ENCODE measurements at regions of chr6 and their contacts with region 1.

Region 1: GRCh38 chr6:47521961-47522360 is 44.4 kb downstream of the CD2AP start:
- DNase-seq: no peak
- ATAC-seq: no peak
- H3K4me3 ChIP-seq: no peak overlapping the region
- H3K27ac ChIP-seq: no peak overlapping the region
- H3K4me1 ChIP-seq: no peaks in the 10 kb centered on the region; the same call in 1 of the 2 replicates
- H3K27me3 ChIP-seq: no peaks in the 10 kb centered on the region
- CTCF ChIP-seq: no peak

Region 2: GRCh38 chr6:46032110-46032998 is 1489.6 kb before region 1 on chr6:
- CTCF ChIA-PET with region 1: no interaction called
- POLR2A ChIA-PET with region 1: interaction called, 10 read pairs
- in situ Hi-C with region 1: no loop called
- intact Hi-C with region 1: no loop called
- DNase-seq: no peak
- ATAC-seq: no peak
- H3K4me3 ChIP-seq: no peak overlapping the region
- H3K27ac ChIP-seq: no peak overlapping the region
- H3K4me1 ChIP-seq: no peaks in the 10 kb centered on the region
- H3K27me3 ChIP-seq: peaks cover 10% of the 10 kb centered on the region
- CTCF ChIP-seq: no peak

Region 3: DNA sequence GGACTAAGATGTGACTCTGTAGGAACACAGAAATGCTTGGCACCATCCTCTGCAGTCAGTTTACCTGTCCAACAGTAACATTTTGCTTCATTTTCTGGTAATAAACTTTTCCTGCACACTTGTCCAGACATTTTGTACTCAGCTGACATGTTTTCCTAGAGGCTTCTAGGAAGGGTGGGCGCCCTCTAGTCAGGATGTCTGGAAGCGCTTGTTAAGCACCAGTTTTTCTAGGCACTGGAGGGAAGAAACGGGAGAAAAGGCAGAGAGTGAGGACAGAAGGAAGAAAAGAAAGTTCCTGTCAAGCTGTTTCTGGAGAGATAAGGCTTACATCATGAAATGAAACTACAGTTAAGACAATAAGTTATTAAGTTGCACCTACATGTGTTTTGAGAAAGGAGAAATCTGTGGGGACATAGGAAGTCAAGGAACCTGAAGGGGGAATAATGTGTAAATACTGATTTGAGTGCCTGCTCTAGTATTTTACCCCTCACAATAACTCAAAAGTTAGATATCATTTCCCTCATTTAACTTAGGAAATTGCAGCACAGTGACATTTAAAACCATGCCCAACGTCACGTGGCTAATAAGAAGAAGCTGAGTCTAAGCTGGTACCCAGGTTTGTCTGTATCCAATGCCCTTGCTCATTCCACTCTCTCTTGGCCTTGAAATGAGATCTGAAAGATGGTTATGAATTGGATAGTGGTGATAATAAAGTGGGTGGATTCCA is 169.6 kb before region 1 on chr6:
- CTCF ChIA-PET with region 1: no interaction called
- POLR2A ChIA-PET with region 1: no interaction called
- in situ Hi-C with region 1: no loop called
- intact Hi-C with region 1: no loop called
- DNase-seq: no peak
- ATAC-seq: no peak
- H3K4me3 ChIP-seq: no peak overlapping the region
- H3K27ac ChIP-seq: no peak overlapping the region
- H3K4me1 ChIP-seq: no peaks in the 10 kb centered on the region
- H3K27me3 ChIP-seq: no peaks in the 10 kb centered on the region
- CTCF ChIP-seq: peak; percentile 44